Esophagus muscularis mucosa (tissue), 4 donors: ENCODE measurements at regions of chr4 and their contacts with region 1.

Region 1: GRCh38 chr4:140861359-140862176 is 105.4 kb upstream of the TBC1D9 start:
- DNase-seq: no peak
- H3K4me3 ChIP-seq: no peak overlapping the region
- H3K27ac ChIP-seq: no peak overlapping the region
- H3K4me1 ChIP-seq: peaks cover 2 to 47% (median 36%) of the 10 kb centered on the region in 4 donors
- H3K27me3 ChIP-seq: no peaks in the 10 kb centered on the region
- CTCF ChIP-seq: peak; percentile 74 to 77 (median 77)
- EP300 ChIP-seq: no peak
- POLR2A ChIP-seq: no peak

Region 2: DNA sequence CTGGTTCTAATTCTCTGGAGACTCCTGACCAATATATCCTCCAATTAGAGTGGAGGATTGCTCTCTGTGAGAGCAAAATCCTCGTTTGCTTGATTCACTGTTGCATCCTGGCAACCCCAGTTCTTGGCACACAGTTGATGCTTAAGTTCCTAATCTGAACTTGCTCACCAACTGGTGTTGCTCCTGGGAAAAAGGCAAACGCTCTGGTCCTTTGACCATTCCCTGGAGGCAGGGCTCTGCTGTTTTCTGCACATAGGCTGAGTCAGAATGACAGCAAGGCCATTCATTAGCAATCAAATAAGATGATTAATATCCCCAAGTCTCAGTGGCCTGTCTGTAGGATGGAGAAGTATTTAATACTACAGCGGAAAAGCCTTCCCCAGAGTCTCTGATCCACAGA is 67.3 kb after region 1 on chr4:
- intact Hi-C with region 1: loop called (anchors 10 kb)
- DNase-seq: no peak
- H3K4me3 ChIP-seq: no peak overlapping the region
- H3K27ac ChIP-seq: peak overlapping the region in 1 of 4 donors; percentile 6
- H3K4me1 ChIP-seq: peaks cover 23 to 50% (median 41%) of the 10 kb centered on the region in 4 donors
- H3K27me3 ChIP-seq: no peaks in the 10 kb centered on the region
- CTCF ChIP-seq: no peak
- EP300 ChIP-seq: no peak
- POLR2A ChIP-seq: no peak

Region 3: GRCh38 chr4:140971077-140971792 is 109.7 kb after region 1 on chr4:
- intact Hi-C with region 1: no loop called
- DNase-seq: no peak
- H3K4me3 ChIP-seq: no peak overlapping the region
- H3K27ac ChIP-seq: peak overlapping the region; percentile 18 to 46 (median 36)
- H3K4me1 ChIP-seq: peaks cover 15 to 30% (median 24%) of the 10 kb centered on the region in 4 donors
- H3K27me3 ChIP-seq: no peaks in the 10 kb centered on the region
- CTCF ChIP-seq: no peak
- EP300 ChIP-seq: no peak
- POLR2A ChIP-seq: no peak

Region 4: DNA sequence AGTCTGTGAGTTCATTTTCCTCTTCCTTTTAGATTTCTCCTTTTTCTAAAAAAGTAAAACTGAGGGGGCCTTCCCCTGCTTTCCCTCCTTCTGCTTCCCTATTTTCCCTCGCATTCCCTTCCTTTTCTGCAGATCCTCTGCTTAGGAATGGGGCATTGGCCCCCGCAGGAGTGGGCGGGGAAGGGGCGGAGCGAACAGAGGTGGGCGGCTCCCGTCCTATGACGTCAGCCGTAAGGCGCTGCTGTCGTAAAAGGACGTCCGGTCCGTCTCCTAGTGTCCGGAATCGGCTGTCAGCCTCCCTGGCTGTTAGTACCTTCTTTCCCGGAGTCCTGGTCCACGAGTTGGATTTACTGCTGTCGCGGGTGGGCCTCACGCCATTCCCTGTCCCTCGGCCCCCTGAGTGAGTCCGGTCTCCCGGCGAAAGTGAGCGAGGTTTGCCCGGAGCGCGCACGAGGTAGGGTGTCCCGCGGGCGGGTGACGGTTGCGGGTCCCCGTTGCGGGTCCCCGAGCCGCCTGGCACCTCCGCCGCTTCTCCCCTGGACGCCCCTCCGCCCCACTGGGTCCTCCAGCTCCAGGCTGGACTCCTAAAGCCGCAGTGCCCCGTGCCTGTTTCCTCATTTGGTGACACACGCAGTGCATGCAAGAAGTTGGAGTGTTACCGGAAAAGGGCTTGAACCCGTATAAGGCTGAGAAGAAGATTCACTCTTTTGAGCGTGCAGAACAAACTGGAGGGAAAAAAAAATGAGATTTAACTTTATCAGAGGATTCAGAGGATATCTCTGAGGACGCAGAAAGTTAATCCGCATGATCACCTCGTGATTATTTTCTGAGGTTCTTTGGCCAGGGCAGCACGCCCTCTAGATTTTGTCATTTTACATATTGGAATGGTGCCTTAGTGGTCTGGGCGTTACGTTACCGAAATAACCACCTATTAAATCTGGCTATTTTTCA is 359.4 kb after region 1 on chr4 and contains the start of gene ZNF330:
- intact Hi-C with region 1: loop called (anchors 10 kb)
- DNase-seq: peak; percentile 96
- H3K4me3 ChIP-seq: peak within 1 kb of the TSS; percentile 88 to 98 (median 94)
- H3K27ac ChIP-seq: peak within 1 kb of the TSS; percentile 94 to 99 (median 98)
- H3K4me1 ChIP-seq: peaks cover 13 to 48% (median 33%) of the 10 kb centered on the region in 4 donors
- H3K27me3 ChIP-seq: no peaks in the 10 kb centered on the region
- CTCF ChIP-seq: peak in 2 of 3 experiments; percentile 17 to 32
- EP300 ChIP-seq: no peak
- POLR2A ChIP-seq: peak; percentile 92
- total RNA-seq, gene ZNF330: 27.5 to 42.4 (median 32.8) TPM